Head of caudate nucleus (tissue), 42 donors: ENCODE measurements at regions of chr7 and their contacts with region 1.

Region 1: DNA sequence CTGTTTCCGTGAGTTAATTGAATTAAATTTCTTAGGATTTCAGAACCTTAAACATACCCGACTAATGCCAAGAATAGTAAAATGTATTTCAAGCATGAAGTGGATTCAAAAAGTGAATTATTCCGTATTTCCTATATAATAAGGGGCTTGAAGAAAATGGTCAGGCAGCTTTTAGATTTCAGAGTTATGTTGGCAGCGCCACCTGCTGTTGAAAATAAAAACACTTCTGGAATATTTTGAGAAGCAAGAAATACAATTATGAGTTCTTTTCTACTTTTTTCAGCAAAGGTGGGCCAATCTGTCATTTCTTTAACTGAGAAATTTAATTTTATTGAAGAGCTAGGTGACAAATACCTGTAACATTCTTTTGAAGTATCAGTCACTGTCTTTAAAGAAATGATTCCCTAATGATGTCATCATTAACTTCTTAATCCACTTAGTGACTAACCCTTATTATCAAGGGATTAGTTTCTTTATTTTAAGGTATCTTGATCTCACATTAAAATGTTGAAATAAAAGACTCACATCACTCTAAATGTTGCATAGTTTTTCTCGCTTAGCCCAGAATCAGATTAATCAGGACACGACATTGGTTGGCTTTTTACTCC is 36.6 kb upstream of the AGR3 start:
- DNase-seq: peak in 22 of 42 donors; percentile 7 to 78 (median 44)

Region 2: GRCh38 chr7:16604054-16604453 is 314.3 kb before region 1 on chr7:
- intact Hi-C with region 1: loop called (anchors 10 kb)
- DNase-seq: peak in 2 of 42 donors; percentile 24 to 53

Region 3: DNA sequence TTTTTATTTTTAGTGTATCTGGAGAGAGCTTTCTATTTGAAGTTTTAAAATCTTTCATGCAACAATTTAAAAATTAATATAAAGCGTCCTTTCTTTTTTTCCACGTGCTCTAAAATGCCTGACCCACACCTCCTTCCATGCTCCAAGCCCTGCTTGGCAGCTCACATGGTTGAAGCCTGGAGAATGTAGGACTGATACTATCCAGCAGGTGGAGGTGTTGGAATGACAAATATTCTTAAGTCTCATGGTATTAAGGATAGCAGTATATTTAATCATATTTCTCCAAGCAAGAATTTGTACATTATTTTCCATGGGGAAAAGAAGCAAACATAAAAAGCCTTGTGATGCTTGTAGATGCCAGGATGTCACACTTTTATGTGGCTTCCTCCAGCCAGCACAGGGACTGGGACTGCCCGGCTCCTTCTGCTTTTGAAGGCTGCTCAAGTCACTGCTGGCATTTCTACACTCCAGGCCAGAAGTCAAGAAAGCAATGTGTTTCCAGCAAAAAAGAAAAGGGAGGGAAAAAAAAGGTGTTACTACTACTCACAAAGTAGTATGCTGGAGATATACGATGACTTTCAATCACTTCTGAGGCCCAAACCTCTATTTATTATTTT is 222.7 kb before region 1 on chr7:
- intact Hi-C with region 1: loop called (anchors 5 kb)
- DNase-seq: peak in 17 of 42 donors; percentile 8 to 53 (median 28)